Esophagus muscularis mucosa (tissue), 4 donors: ENCODE measurements at regions of chr10 and their contacts with region 1.

Region 1: DNA sequence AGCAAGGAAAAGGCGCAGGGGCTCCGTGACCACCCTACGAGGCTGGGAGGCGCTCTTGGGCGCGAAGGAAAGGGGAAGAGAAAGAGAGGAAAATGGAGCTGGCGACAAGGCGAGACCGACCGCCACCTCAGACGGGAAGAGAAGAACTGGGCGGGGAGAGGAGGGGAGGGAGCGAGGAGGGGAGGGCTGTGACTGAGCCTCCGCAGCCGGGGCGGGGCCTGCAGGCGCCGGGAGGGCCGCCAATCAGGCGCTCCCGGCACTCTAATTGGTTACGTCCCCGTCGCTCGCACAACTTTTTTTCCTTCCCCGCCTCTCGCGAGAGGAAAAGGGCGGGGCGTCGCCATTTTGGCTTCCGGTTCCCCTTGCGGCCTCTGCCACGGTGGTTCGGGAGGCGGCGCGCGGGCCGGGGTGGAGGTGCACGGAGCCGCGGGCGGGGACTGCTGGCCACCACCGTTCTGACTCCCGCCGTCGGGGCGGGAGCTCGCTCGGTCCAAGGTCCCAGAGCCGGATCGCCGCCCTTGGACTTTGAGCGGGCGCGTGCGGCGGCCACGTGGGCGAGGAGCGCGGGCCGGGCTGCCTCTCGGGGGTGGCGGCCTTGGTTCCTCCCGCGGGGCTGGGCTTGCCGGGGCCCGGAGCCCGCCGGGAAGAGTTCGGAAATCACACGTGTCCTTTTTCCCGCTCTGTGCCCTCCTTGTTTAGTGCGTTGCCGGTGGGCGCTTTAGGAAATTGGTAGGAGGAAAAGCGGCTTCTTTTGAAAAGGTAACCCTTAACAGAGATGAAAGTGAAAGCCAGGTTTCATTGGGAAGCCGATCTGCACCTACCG is at the start of gene GDI2:
- DNase-seq: peak; percentile 99
- H3K4me3 ChIP-seq: peak within 1 kb of the TSS; percentile 81 to 100 (median 96)
- H3K27ac ChIP-seq: peak within 1 kb of the TSS; percentile 98 to 99 (median 98)
- H3K4me1 ChIP-seq: peaks cover 32 to 49% (median 48%) of the 10 kb centered on the region in 4 donors
- H3K27me3 ChIP-seq: no peaks in the 10 kb centered on the region
- CTCF ChIP-seq: peak in 1 of 3 experiments; percentile 14
- EP300 ChIP-seq: no peak
- POLR2A ChIP-seq: peak; percentile 73
- total RNA-seq, gene GDI2: 194 to 233 (median 210) TPM

Region 2: GRCh38 chr10:5684318-5684970 is 129.1 kb before region 1 on chr10 and contains the start of gene TASOR2:
- intact Hi-C with region 1: loop called (anchors 5 kb)
- DNase-seq: peak; percentile 98
- H3K4me3 ChIP-seq: peak within 1 kb of the TSS; percentile 88 to 97 (median 94)
- H3K27ac ChIP-seq: peak within 1 kb of the TSS; percentile 86 to 92 (median 90)
- H3K4me1 ChIP-seq: peaks cover 8 to 34% (median 27%) of the 10 kb centered on the region in 4 donors
- H3K27me3 ChIP-seq: no peaks in the 10 kb centered on the region
- CTCF ChIP-seq: no peak
- EP300 ChIP-seq: no peak
- POLR2A ChIP-seq: no peak
- total RNA-seq, gene TASOR2: 56.9 to 66.3 (median 63.9) TPM

Region 3: DNA sequence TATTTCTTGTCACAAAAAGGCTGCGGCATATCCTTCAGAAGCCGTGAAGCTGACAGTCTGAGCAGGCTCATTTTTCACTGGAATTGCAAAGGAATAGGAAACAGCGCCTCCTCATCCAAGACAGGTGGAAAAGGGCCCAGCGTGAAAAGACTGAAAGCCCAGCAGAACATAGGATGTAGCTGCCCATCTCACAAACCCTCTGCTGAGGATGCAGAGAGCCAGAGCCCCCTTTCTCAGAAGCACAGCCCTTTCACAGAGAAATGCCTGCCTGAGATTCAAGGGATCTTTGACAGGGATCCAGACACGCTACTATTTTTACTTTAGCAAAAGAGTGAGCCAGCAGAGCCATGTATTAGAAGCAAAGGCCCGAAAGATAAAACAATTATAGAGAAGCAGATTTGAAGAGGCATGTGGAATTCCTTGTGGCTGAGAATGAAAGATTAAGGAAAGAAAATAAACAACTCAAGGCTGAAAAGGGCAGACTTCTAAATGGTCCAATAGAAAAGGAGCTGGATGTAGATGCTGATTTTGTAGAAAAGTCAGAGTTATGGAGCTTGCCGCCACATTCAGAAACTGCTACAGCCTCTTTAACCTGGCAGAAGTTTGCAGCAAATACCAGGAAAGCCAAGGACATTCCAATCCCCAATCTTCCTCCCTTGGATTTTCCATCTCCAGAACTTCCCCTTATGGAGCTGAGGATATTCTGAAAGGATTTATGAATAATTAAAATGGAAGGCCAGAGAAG is 37.2 kb before region 1 on chr10:
- intact Hi-C with region 1: loop called (anchors 5 kb)
- DNase-seq: no peak
- H3K4me3 ChIP-seq: peak overlapping the region in 2 of 4 donors; percentile 7 to 15
- H3K27ac ChIP-seq: peak overlapping the region; percentile 58 to 72 (median 62)
- H3K4me1 ChIP-seq: peaks cover 28 to 39% (median 34%) of the 10 kb centered on the region in 4 donors
- H3K27me3 ChIP-seq: no peaks in the 10 kb centered on the region
- CTCF ChIP-seq: peak in 2 of 3 experiments; percentile 17 to 28
- EP300 ChIP-seq: no peak
- POLR2A ChIP-seq: no peak

Region 4: DNA sequence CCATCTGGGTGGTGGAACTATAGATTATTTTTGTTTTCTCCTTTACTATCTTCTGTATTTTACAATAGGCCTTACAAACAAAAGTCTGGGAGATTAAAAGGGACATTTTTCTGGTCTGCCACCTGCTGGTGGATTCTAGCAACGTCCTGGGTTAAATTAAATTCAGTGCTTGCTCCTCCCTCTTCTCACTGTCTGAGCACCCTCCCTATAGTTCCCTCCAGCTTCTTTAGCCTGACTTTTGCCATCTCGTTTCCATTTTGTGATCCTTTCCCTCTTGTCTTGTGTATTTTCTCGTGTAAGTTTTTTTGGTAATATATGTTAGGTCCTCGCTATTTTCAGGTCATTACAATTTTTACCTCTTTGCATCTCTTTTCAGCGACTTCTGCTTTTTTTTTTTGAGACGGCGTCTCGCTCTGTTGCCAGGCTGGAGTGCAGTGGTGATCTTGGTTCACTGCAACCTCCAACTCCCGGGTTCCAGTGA is 60.1 kb after region 1 on chr10:
- intact Hi-C with region 1: loop called (anchors 5 kb)
- DNase-seq: peak; percentile 94
- H3K4me3 ChIP-seq: no peak overlapping the region
- H3K27ac ChIP-seq: no peak overlapping the region
- H3K4me1 ChIP-seq: peaks cover 0 to 3% (median 0%) of the 10 kb centered on the region in 4 donors
- H3K27me3 ChIP-seq: no peaks in the 10 kb centered on the region
- CTCF ChIP-seq: peak; percentile 76 to 79 (median 79)
- EP300 ChIP-seq: no peak
- POLR2A ChIP-seq: no peak

Region 5: GRCh38 chr10:5889624-5890451 is 76.3 kb after region 1 on chr10 and contains the starts of genes ANKRD16 and FBH1:
- intact Hi-C with region 1: loop called (anchors 5 kb)
- DNase-seq: peak; percentile 99
- H3K4me3 ChIP-seq: peak within 1 kb of the TSS; percentile 84 to 94 (median 90)
- H3K27ac ChIP-seq: peak within 1 kb of the TSS; percentile 80 to 93 (median 90)
- H3K4me1 ChIP-seq: peaks cover 39 to 56% (median 48%) of the 10 kb centered on the region in 4 donors
- H3K27me3 ChIP-seq: no peaks in the 10 kb centered on the region
- CTCF ChIP-seq: peak in 1 of 3 experiments; percentile 19
- EP300 ChIP-seq: no peak
- POLR2A ChIP-seq: peak; percentile 52
- total RNA-seq, gene ANKRD16: 5.1 to 9.0 (median 5.9) TPM
- total RNA-seq, gene FBH1: 90.3 to 93.0 (median 92.3) TPM

Region 6: DNA sequence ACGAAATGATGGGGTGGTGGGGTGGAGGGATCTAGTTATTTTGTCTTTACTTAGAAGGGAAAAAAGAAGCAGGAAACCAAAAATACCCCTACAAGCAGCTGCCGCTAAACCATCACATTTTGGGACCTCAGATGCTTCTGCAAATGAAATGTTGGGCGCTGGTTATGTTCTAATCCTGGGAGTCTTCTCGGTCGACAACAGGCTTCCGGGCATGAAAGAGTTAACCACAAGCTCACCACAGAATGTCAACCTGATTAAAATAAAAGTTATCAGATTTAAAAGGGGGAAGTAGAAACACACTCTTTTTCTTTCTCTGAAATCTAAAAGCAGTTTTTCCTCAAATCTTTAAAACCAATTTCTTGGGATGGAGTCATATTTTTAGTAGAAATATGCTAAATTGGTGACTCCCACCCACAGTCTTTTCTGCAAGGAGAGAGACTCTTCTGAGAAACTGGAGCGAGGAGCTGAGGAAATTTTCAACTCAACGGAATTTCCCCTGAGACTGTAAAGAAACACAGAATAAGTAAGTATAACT is 231.9 kb after region 1 on chr10:
- intact Hi-C with region 1: no loop called
- DNase-seq: peak; percentile 50
- H3K4me3 ChIP-seq: no peak overlapping the region
- H3K27ac ChIP-seq: no peak overlapping the region
- H3K4me1 ChIP-seq: peaks cover under 1 to 7% (median 2%) of the 10 kb centered on the region in 4 donors
- H3K27me3 ChIP-seq: no peaks in the 10 kb centered on the region
- CTCF ChIP-seq: no peak
- EP300 ChIP-seq: no peak
- POLR2A ChIP-seq: no peak